IMR-90 (cell line): ENCODE measurements at regions of chr22 and their contacts with region 1.

Region 1: DNA sequence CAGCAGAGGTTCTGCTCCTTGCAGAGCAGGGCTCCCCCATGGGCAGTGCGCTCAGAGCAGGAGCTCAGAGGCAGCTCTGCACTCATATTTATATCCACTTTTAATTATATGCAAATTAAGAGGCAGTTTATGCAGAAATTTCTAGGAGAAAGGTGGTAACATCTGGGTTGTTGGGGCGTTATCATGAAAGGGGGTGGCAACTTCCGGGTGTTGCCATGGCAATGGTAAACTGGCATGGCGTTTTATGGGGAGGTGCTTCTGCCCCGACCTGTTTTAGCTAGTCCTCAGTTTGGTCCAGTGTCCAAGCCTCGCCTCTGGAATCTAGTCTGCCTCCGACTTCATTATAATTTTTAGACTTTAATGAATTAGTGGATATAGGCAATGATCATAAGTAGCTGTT is 1191.7 kb downstream of the TBC1D22A start:
- DNase-seq: no peak
- ATAC-seq: no peak
- H3K4me3 ChIP-seq: no peak overlapping the region
- H3K27ac ChIP-seq: no peak overlapping the region
- H3K4me1 ChIP-seq: no peaks in the 10 kb centered on the region
- H3K27me3 ChIP-seq: no peaks in the 10 kb centered on the region
- CTCF ChIP-seq: no peak
- POLR2A ChIP-seq: no peak
- RAD21 ChIP-seq: no peak

Region 2: DNA sequence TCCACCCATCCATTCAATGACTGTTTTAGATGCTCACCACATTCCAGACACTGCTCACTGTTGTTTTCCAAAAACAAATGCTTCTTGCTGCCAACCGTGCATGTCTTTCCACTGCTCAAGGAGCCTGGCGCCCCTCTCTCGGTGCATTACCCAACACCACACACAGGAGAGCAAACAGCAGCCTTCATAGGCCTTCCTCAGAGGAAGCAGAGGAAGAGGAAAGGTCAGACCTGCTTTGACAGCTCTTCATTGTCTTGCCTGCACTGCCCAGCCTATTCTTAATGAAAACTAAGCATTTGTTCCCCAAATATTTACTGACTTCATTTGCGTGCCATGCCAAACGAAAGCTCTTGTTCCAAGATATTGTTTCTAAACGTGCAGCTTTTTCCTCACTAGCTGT is 62.5 kb before region 1 on chr22:
- CTCF ChIA-PET with region 1: no interaction called
- POLR2A ChIA-PET with region 1: no interaction called
- dilution Hi-C with region 1: no loop called
- in situ Hi-C with region 1: loop called (anchors 10 kb)
- intact Hi-C with region 1: no loop called
- DNase-seq: no peak
- ATAC-seq: no peak
- H3K4me3 ChIP-seq: no peak overlapping the region
- H3K27ac ChIP-seq: no peak overlapping the region
- H3K4me1 ChIP-seq: no peaks in the 10 kb centered on the region
- H3K27me3 ChIP-seq: no peaks in the 10 kb centered on the region
- CTCF ChIP-seq: no peak
- POLR2A ChIP-seq: no peak
- RAD21 ChIP-seq: no peak